Gastrocnemius medialis (tissue), 4 donors: ENCODE measurements at regions of chr3 and their contacts with region 1.

Region 1: GRCh38 chr3:185764163-185764979 is 60.5 kb downstream of the IGF2BP2 start:
- DNase-seq: no peak
- ATAC-seq: peak; percentile 22 to 23
- H3K4me3 ChIP-seq: no peak overlapping the region
- H3K27ac ChIP-seq: no peak overlapping the region
- H3K4me1 ChIP-seq: peaks cover 23 to 24% of the 10 kb centered on the region in 2 donors
- H3K27me3 ChIP-seq: no peaks in the 10 kb centered on the region
- CTCF ChIP-seq: no peak
- POLR2A ChIP-seq: no peak

Region 2: GRCh38 chr3:185659942-185660921 is 104.1 kb before region 1 on chr3:
- in situ Hi-C with region 1: loop called in 1 of 4 experiments (anchors 10 kb)
- intact Hi-C with region 1: loop called (anchors 2 kb)
- DNase-seq: peak in 1 of 2 donors; percentile 61
- ATAC-seq: peak; percentile 25 to 43
- H3K4me3 ChIP-seq: no peak overlapping the region
- H3K27ac ChIP-seq: peak overlapping the region in 1 of 4 donors; percentile 17
- H3K4me1 ChIP-seq: no peaks in the 10 kb centered on the region
- H3K27me3 ChIP-seq: no peaks in the 10 kb centered on the region
- CTCF ChIP-seq: peak; percentile 56 to 85 (median 79)
- POLR2A ChIP-seq: no peak

Region 3: GRCh38 chr3:185711255-185711870 is 53.0 kb before region 1 on chr3:
- in situ Hi-C with region 1: no loop called
- intact Hi-C with region 1: no loop called
- DNase-seq: no peak
- ATAC-seq: no peak
- H3K4me3 ChIP-seq: no peak overlapping the region
- H3K27ac ChIP-seq: no peak overlapping the region
- H3K4me1 ChIP-seq: no peaks in the 10 kb centered on the region
- H3K27me3 ChIP-seq: peaks cover 0 to 7% (median 7%) of the 10 kb centered on the region in 3 donors
- CTCF ChIP-seq: no peak
- POLR2A ChIP-seq: no peak

Region 4: GRCh38 chr3:185733980-185734724 is 30.2 kb before region 1 on chr3:
- in situ Hi-C with region 1: no loop called
- intact Hi-C with region 1: loop called (anchors 1 kb)
- DNase-seq: peak; percentile 13 to 20
- ATAC-seq: peak; percentile 68 to 78
- H3K4me3 ChIP-seq: no peak overlapping the region
- H3K27ac ChIP-seq: no peak overlapping the region
- H3K4me1 ChIP-seq: peaks cover 0 to 7% of the 10 kb centered on the region in 2 donors
- H3K27me3 ChIP-seq: no peaks in the 10 kb centered on the region
- CTCF ChIP-seq: peak; percentile 27 to 57 (median 54)
- POLR2A ChIP-seq: no peak

Region 5: DNA sequence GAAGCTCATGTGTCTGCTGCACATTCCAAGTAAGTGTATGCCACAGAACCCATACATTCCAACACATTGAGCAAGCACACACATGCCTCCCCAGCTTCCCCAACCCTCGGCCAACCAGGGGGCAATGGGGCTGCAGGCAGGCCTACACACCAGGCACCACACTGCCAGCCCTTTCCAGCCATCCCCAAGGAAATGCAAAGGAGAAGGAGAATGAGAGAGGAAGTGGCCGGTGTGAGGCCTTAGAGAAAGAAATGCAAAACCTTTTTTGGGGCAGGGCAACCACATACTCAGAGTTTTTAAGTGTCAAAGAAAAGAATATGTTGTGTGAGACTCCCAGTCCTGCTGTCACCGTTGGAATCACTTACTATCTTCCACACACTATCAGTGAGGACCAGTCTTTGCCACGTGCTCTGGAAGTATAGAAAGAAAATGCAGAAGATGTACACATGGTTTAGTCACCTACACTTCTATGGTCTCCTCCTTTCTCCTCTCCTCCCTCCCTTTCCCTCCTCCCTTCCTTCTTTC is 49.4 kb after region 1 on chr3:
- in situ Hi-C with region 1: no loop called
- intact Hi-C with region 1: no loop called
- DNase-seq: no peak
- ATAC-seq: no peak
- H3K4me3 ChIP-seq: no peak overlapping the region
- H3K27ac ChIP-seq: no peak overlapping the region
- H3K4me1 ChIP-seq: no peaks in the 10 kb centered on the region
- H3K27me3 ChIP-seq: peaks cover 7 to 11% (median 9%) of the 10 kb centered on the region in 3 donors
- CTCF ChIP-seq: no peak
- POLR2A ChIP-seq: no peak